ENCODE measurements at regions of chrX and their contacts with region 1.

Region 1: GRCh38 chrX:40244980-40245379 is 147.2 kb upstream of the BCOR start:
- DNase-seq: peak; percentile 14
- ATAC-seq: no peak; the same call in 1 of the 2 replicates
- H3K4me3 ChIP-seq: no peak overlapping the region
- H3K27ac ChIP-seq: no peak overlapping the region
- H3K4me1 ChIP-seq: peaks cover 6% of the 10 kb centered on the region
- H3K27me3 ChIP-seq: peaks cover 9% of the 10 kb centered on the region
- CTCF ChIP-seq: 0 out of 2 replicates have a peak, but pooled peaks have one; percentile 5
- POLR2A ChIP-seq: no peak
- RAD21 ChIP-seq: no peak

Region 2: GRCh38 chrX:40108959-40109287 is 136.1 kb before region 1 on chrX:
- CTCF ChIA-PET with region 1: no interaction called
- POLR2A ChIA-PET with region 1: no interaction called
- dilution Hi-C with region 1: no loop called
- in situ Hi-C with region 1: no loop called
- intact Hi-C with region 1: loop called (anchors 5 kb)
- DNase-seq: peak; percentile 76
- ATAC-seq: peak; percentile 65
- H3K4me3 ChIP-seq: peak overlapping the region; percentile 72
- H3K27ac ChIP-seq: peak overlapping the region; percentile 71
- H3K4me1 ChIP-seq: peaks cover 10% of the 10 kb centered on the region
- H3K27me3 ChIP-seq: peaks cover 3% of the 10 kb centered on the region; the same call in 1 of the 2 replicates
- CTCF ChIP-seq: no peak
- POLR2A ChIP-seq: no peak
- RAD21 ChIP-seq: no peak

Measured in IMR-90 (cell line).